ENCODE measurements at regions of chr18 and their contacts with region 1.

Region 1: DNA sequence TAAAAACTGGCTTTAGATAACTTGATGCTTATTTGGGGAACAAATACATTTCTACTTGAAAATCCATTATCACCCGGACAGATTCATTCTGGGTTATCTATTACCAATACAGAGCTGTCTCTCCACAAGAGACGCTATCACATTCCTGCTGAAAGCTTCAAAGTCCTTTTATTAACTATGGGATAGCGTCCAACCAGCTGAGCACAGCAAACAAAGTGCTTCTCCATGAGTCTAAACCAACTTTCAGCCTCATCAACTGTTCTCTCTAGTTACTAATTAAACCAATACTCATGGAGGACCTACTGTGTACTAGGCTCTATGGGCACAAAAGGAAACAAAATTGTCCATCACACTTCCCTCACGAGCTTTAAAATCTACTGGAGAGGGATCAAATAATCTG is 132.8 kb downstream of the L3MBTL4 start:
- DNase-seq: no peak
- H3K4me3 ChIP-seq: no peak overlapping the region
- H3K27ac ChIP-seq: no peak overlapping the region
- H3K4me1 ChIP-seq: no peaks in the 10 kb centered on the region
- H3K27me3 ChIP-seq: no peaks in the 10 kb centered on the region
- CTCF ChIP-seq: no peak

Region 2: GRCh38 chr18:6249170-6249569 is 32.7 kb before region 1 on chr18:
- CTCF ChIA-PET with region 1: no interaction called
- dilution Hi-C with region 1: no loop called
- in situ Hi-C with region 1: no loop called
- intact Hi-C with region 1: no loop called
- DNase-seq: no peak
- H3K4me3 ChIP-seq: no peak overlapping the region
- H3K27ac ChIP-seq: no peak overlapping the region
- H3K4me1 ChIP-seq: no peaks in the 10 kb centered on the region
- H3K27me3 ChIP-seq: no peaks in the 10 kb centered on the region
- CTCF ChIP-seq: no peak

Region 3: DNA sequence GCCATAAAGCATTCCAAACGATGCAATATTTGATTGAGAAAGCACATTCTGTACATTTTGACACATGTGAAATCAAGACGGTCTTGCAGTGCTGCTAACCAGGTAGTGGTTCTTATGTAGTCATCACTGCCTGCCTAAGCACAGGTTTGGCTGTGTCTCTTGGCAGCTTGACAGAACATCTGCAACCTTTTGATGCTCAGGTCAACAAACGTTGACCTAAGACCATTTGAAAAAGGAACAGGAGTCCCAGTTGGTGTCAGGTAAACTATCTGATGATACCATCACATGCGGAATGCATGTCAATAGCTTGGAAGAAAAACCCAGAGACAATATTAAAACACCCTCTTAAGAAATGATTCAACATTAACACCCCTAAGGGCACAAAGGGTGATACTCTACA is 52.1 kb after region 1 on chr18:
- CTCF ChIA-PET with region 1: no interaction called
- dilution Hi-C with region 1: loop called (anchors 5 kb)
- in situ Hi-C with region 1: no loop called
- intact Hi-C with region 1: no loop called
- DNase-seq: no peak
- H3K4me3 ChIP-seq: no peak overlapping the region
- H3K27ac ChIP-seq: no peak overlapping the region
- H3K4me1 ChIP-seq: no peaks in the 10 kb centered on the region
- H3K27me3 ChIP-seq: no peaks in the 10 kb centered on the region
- CTCF ChIP-seq: no peak

Measured in mammary epithelial cell (primary cell).